Right lobe of liver (tissue), 6 donors: ENCODE measurements at regions of chr7 and their contacts with region 1.

Region 1: GRCh38 chr7:76515999-76516443 is 5.7 kb downstream of the UPK3B start:
- DNase-seq: peak in 2 of 3 donors; percentile 45 to 57
- ATAC-seq: peak in 3 of 4 donors; percentile 15 to 30 (median 22)
- H3K4me3 ChIP-seq: no peak overlapping the region
- H3K27ac ChIP-seq: no peak overlapping the region
- H3K4me1 ChIP-seq: no peaks in the 10 kb centered on the region
- H3K27me3 ChIP-seq: no peaks in the 10 kb centered on the region
- CTCF ChIP-seq: peak; percentile 52 to 59 (median 56)
- POLR2A ChIP-seq: no peak

Region 2: GRCh38 chr7:76364198-76364584 is 151.8 kb before region 1 on chr7:
- intact Hi-C with region 1: no loop called
- DNase-seq: no peak
- ATAC-seq: no peak
- H3K4me3 ChIP-seq: no peak overlapping the region
- H3K27ac ChIP-seq: peak overlapping the region in 2 of 3 donors; percentile 37 to 76
- H3K4me1 ChIP-seq: peaks cover 0 to 7% (median 0%) of the 10 kb centered on the region in 4 donors
- H3K27me3 ChIP-seq: no peaks in the 10 kb centered on the region
- CTCF ChIP-seq: no peak
- POLR2A ChIP-seq: no peak

Region 3: GRCh38 chr7:76997381-76997780 is 481.4 kb after region 1 on chr7:
- intact Hi-C with region 1: loop called in 1 of 2 experiments (anchors 10 kb)
- DNase-seq: no peak
- ATAC-seq: peak in 3 of 4 donors; percentile 6 to 33 (median 9)
- H3K4me3 ChIP-seq: no peak overlapping the region
- H3K27ac ChIP-seq: no peak overlapping the region
- H3K4me1 ChIP-seq: no peaks in the 10 kb centered on the region
- H3K27me3 ChIP-seq: no peaks in the 10 kb centered on the region
- CTCF ChIP-seq: no peak
- POLR2A ChIP-seq: no peak

Region 4: GRCh38 chr7:77188731-77189437 is 672.9 kb after region 1 on chr7:
- intact Hi-C with region 1: no loop called
- DNase-seq: no peak
- ATAC-seq: peak in 3 of 4 donors; percentile 27 to 54 (median 41)
- H3K4me3 ChIP-seq: no peak overlapping the region
- H3K27ac ChIP-seq: no peak overlapping the region
- H3K4me1 ChIP-seq: peaks cover 0 to 3% (median 0%) of the 10 kb centered on the region in 4 donors
- H3K27me3 ChIP-seq: no peaks in the 10 kb centered on the region
- CTCF ChIP-seq: no peak
- POLR2A ChIP-seq: no peak